WTC11 (cell line): ENCODE measurements at regions of chr10 and their contacts with region 1.

Region 1: GRCh38 chr10:99917963-99918825 is 91.6 kb downstream of the DNMBP start:
- DNase-seq: peak; percentile 73
- ATAC-seq: peak; percentile 49
- H3K4me3 Mint-ChIP-seq: peak overlapping the region; percentile 68
- H3K27ac Mint-ChIP-seq: peak overlapping the region; percentile 99
- H3K4me1 Mint-ChIP-seq: peaks cover 68% of the 10 kb centered on the region
- H3K27me3 Mint-ChIP-seq: no peaks in the 10 kb centered on the region
- CTCF ChIP-seq: no peak

Region 2: GRCh38 chr10:99930731-99931550 is 12.7 kb after region 1 on chr10:
- CTCF ChIA-PET with region 1: interaction called, 13 read pairs
- POLR2A ChIA-PET with region 1: interaction called, 6 read pairs
- DNase-seq: peak; percentile 26
- ATAC-seq: peak; percentile 76
- H3K4me3 Mint-ChIP-seq: peak overlapping the region; percentile 39
- H3K27ac Mint-ChIP-seq: peak overlapping the region; percentile 92
- H3K4me1 Mint-ChIP-seq: peaks cover 49% of the 10 kb centered on the region
- H3K27me3 Mint-ChIP-seq: no peaks in the 10 kb centered on the region
- CTCF ChIP-seq: no peak

Region 3: GRCh38 chr10:100020142-100020885 is 102.1 kb after region 1 on chr10:
- CTCF ChIA-PET with region 1: interaction called, 12 read pairs
- POLR2A ChIA-PET with region 1: interaction called, 5 read pairs
- DNase-seq: no peak
- ATAC-seq: peak; percentile 16; the same call in 1 of the 2 replicates
- H3K4me3 Mint-ChIP-seq: no peak overlapping the region
- H3K27ac Mint-ChIP-seq: peak overlapping the region; percentile 14; the same call in 1 of the 2 replicates
- H3K4me1 Mint-ChIP-seq: peaks cover 14% of the 10 kb centered on the region
- H3K27me3 Mint-ChIP-seq: no peaks in the 10 kb centered on the region
- CTCF ChIP-seq: no peak